Activated T-helper 2 cell treated with anti-CD3 and anti-CD28 coated beads, Interferon-gamma antibody, Interleukin-2, Interleukin-4, amounts not matched to agents 10 μg/mL and 5 μg/mL and 100 μg/mL, durations not matched to agents 14 hours and 24 hours and 36 hours (primary cell): ENCODE measurements at regions of chr16 and their contacts with region 1.

Region 1: GRCh38 chr16:48231727-48232492 is 12.2 kb upstream of the LONP2 start:
- DNase-seq: peak; percentile 28
- H3K4me3 Mint-ChIP-seq: no peak overlapping the region
- H3K27ac Mint-ChIP-seq: peak overlapping the region; percentile 58
- H3K4me1 Mint-ChIP-seq: peaks cover 21% of the 10 kb centered on the region
- H3K27me3 Mint-ChIP-seq: no peaks in the 10 kb centered on the region

Region 2: GRCh38 chr16:48244080-48244862 is 12.4 kb after region 1 on chr16 and contains the start of gene LONP2:
- intact Hi-C with region 1: loop called (anchors 1 kb)
- DNase-seq: peak; percentile 89
- H3K4me3 Mint-ChIP-seq: peak within 1 kb of the TSS; percentile 92
- H3K27ac Mint-ChIP-seq: peak within 1 kb of the TSS; percentile 88
- H3K4me1 Mint-ChIP-seq: peaks cover 23% of the 10 kb centered on the region
- H3K27me3 Mint-ChIP-seq: no peaks in the 10 kb centered on the region
- total RNA-seq, gene LONP2: 49.7 and 54.2 TPM in 2 replicates

Region 3: DNA sequence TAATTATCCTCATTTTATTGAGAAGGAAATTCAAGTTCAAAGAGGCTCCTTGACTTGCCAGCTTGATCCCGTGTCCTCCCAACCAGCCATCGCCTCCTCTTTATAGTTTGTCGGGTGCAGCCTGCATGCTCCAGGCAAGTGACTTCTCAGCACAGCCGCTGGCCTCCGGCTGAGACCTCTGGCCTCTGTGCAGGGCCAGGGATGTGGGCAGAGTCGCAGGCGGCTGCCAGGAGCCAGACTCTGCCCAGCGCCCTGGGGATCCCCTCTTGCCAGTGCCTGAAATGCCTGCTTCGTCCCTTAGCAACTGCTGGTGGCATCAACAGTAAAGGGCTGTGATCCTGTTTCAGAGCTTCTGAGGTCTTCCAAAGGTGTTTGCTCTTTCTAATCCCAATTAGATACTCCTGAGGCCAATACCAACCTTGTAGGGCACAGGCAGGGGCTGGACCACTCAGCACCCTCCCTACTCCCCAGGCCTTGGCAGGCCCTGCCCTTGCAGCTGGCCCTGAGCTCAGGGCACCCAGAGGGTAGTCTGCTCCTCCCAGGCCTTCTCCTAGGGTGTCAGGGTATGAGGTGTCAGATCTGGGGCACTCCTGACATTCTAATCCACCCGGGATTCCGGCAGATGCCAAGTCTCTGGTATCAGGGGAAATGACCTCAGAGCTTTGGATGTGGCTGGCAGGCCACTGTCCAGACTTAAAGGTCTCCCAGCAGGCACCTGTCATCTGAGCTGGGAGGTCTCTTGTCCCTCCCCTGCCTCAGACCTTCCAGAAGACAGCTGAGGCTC is 221.3 kb after region 1 on chr16:
- intact Hi-C with region 1: loop called (anchors 10 kb)
- DNase-seq: no peak
- H3K4me3 Mint-ChIP-seq: no peak overlapping the region
- H3K27ac Mint-ChIP-seq: no peak overlapping the region
- H3K4me1 Mint-ChIP-seq: peaks cover 7% of the 10 kb centered on the region
- H3K27me3 Mint-ChIP-seq: peaks cover 19% of the 10 kb centered on the region

Region 4: DNA sequence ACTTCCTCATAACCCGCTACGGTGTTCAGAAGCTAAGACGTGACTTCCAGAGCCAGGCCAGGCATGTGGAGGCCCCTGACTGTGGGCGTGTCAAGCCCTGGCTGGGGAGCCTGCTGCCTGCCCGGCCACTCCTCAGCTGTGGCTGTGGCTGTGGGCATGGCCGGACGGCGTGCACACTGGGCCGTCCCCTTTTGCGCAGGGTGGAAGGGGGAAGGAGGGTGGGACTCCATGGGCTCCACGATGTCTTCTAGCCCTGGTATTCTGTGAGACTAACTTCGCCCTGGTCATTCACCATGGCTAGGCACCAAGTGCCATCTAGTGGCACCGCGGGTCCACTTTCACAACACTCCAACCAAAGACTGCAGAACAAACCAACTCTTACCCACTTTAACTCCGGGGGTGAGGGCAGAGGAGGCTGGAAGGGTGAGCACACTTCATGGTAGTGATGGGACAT is 310.1 kb after region 1 on chr16:
- intact Hi-C with region 1: loop called (anchors 5 kb)
- DNase-seq: no peak
- H3K4me3 Mint-ChIP-seq: no peak overlapping the region
- H3K27ac Mint-ChIP-seq: no peak overlapping the region
- H3K4me1 Mint-ChIP-seq: peaks cover 12% of the 10 kb centered on the region
- H3K27me3 Mint-ChIP-seq: no peaks in the 10 kb centered on the region